OCI-LY7 (cell line): ENCODE measurements at regions of chr3 and their contacts with region 1.

Region 1: DNA sequence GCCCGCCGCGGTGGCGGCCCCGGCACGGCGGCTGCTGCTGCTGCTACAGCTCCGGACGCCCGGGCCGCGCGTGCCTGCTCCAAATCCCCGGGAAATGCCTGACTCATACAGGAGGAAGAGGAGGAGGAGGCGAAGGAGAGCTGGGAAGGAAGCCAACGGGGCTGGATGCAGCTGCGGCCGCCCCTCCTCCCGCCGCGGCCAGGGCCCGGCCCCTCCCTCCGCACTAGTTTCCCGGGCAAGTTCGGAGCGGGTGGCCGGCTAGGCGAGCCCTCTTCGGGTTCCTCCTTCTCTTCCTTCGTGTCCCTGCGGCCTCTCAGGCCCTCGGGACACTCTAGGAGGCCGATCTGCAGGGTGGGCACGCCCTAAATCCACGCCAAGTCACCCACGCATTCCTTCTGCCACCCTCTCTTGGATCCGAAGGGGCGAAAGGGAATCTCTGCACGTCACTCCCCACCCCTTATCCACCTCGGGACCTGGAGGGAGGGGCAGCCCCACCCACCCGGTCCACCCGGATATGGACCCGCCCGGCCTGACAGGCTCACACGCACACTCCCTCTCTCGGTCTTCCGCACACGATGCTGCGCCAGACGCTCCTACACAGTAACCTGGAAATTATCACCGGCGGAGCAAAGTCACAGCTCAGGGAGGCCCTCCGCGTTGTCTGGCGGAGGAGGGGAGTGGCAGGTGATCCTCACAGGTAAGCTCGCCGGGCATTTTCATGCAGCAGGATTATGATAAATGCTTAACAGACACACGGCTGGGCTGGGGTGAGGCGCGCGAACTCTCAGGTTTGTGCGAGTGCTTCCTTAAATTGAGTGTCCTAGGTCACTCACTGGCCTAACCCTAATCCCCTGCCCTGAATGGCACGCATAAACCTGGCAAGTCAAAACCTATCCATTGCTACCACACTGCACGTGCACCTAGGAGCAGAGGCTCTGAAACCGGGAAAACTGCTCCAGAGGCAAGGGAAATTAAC is at the starts of genes OSBPL10 and ZNF860:
- DNase-seq: peak; percentile 81
- H3K4me3 ChIP-seq: peak within 1 kb of the TSS; percentile 91
- H3K27ac ChIP-seq: peak within 1 kb of the TSS; percentile 88
- H3K4me1 ChIP-seq: peaks cover 72% of the 10 kb centered on the region
- CTCF ChIP-seq: peak; percentile 11; the same call in 1 of the 2 replicates
- total RNA-seq, gene OSBPL10: 58.4 and 65.7 TPM in 2 replicates
- total RNA-seq, gene ZNF860: 13.8 and 20.3 TPM in 2 replicates

Region 2: DNA sequence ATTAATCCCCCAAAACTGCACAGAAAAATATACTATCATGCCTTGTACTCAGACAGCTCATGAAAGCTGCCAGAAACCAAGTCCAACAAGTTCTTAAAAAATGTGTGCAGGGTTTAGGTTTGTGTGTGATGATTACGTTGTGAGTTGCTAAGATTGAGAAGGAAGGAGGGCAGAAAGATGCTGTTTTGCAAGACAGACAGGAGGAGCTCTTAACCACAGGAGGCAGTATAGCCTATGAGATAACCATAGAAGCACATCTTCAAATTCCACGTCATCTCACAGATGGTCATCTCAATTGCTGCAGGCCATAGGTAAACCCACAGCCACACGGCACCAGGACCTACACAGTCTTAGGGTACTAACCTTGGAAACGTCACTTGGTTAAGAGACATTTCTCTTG is 256.8 kb before region 1 on chr3:
- CTCF ChIA-PET with region 1: interaction called, 3 read pairs
- POLR2A ChIA-PET with region 1: no interaction called
- intact Hi-C with region 1: loop called (anchors 10 kb)
- DNase-seq: peak; percentile 65
- H3K4me3 ChIP-seq: no peak overlapping the region
- H3K27ac ChIP-seq: no peak overlapping the region
- H3K4me1 ChIP-seq: peaks cover 9% of the 10 kb centered on the region
- CTCF ChIP-seq: peak; percentile 81

Region 3: DNA sequence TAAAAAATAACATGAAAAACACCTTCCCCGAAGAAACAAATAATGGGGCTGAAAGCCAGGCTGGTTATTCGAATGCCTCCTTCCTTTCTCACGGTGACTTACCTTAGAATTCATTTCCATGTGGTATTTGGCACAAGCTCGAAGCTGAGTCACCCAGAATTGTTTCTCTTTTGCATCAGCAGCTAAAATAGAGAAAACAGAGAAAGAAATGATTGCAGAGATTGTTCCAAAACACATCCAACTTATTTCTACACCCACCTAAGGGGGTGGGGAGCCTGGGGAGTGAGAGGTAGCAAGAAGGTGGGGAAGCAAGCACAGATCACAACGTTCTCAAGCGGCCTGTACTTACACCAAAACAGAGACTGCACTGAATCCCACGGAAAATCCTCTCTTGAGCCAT is 105.2 kb before region 1 on chr3:
- CTCF ChIA-PET with region 1: interaction called, 4 read pairs
- POLR2A ChIA-PET with region 1: interaction called, 3 read pairs
- intact Hi-C with region 1: loop called (anchors 2 kb)
- DNase-seq: no peak
- H3K4me3 ChIP-seq: peak overlapping the region; percentile 68
- H3K27ac ChIP-seq: peak overlapping the region; percentile 90
- H3K4me1 ChIP-seq: peaks cover 83% of the 10 kb centered on the region
- CTCF ChIP-seq: no peak

Region 4: DNA sequence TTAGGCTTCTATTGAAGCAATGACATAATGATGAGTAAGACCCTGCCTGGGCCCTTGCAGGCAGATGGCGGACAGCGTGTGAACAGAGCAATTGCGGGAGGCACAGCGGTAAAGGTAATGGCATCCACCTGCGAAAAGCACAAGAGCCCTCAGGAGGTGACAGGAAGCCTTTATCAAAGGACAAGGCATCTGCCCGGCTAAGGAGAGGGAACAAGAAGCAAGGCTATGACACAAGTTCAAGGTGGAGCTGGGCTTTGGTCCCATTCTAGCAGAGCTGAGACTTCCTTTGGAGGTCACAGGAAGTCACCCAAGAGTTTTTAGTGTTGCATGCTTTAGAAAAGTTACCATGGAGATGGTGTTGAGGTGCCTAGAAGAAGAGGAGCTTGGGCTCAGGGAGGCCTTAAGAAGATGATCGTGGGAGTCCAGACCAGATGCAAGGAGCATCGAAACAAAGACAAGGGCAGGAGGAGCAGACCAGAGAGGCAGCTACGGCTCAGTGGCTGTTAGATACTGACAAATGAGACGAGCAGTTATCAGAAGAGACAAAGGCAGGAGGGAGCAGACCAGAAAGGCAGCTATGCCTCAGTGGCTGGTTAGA is 34.9 kb before region 1 on chr3:
- CTCF ChIA-PET with region 1: interaction called, 3 read pairs
- POLR2A ChIA-PET with region 1: interaction called, 13 read pairs
- intact Hi-C with region 1: loop called (anchors 1 kb)
- DNase-seq: peak; percentile 82
- H3K4me3 ChIP-seq: peak overlapping the region; percentile 57
- H3K27ac ChIP-seq: peak overlapping the region; percentile 100
- H3K4me1 ChIP-seq: peaks cover 99% of the 10 kb centered on the region
- CTCF ChIP-seq: no peak

Region 5: DNA sequence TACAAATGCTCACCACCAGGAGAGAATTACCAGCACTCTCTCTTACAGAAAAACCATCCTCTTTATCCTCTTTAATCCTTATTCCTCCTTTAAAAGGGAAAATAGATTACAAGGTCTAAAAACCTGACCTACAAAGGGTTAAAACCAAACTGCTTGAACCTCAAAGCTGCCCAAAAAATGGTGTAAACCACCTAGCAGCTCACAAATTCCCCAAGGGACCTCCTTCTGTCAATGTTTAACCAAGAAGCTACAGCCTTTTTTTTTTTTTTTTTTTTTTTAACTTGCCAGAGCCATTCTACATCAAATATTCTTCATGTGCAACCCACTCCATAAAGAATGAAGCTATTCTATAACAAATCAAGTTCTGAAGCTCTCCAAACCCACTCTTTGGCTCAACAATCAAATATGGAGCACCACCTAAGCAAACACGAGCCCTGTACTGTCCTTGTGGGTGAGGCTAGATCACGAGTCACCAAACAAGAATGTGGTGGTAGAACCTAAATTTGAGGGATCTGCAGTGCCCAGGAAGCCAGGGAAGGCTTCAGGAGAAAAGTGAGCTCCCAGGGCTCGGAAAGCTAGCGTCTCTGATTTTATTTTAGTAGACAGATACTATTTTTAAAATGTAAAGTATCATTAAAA is 20.6 kb before region 1 on chr3:
- CTCF ChIA-PET with region 1: interaction called, 3 read pairs
- POLR2A ChIA-PET with region 1: interaction called, 58 read pairs
- intact Hi-C with region 1: no loop called
- DNase-seq: peak; percentile 85
- H3K4me3 ChIP-seq: peak overlapping the region; percentile 65
- H3K27ac ChIP-seq: peak overlapping the region; percentile 91
- H3K4me1 ChIP-seq: peaks cover 82% of the 10 kb centered on the region
- CTCF ChIP-seq: no peak

Region 6: GRCh38 chr3:32026593-32026992 is 45.1 kb after region 1 on chr3:
- CTCF ChIA-PET with region 1: interaction called, 4 read pairs
- POLR2A ChIA-PET with region 1: interaction called, 4 read pairs
- intact Hi-C with region 1: loop called (anchors 2 kb)
- DNase-seq: peak; percentile 98
- H3K4me3 ChIP-seq: peak overlapping the region; percentile 42
- H3K27ac ChIP-seq: peak overlapping the region; percentile 100
- H3K4me1 ChIP-seq: peaks cover 61% of the 10 kb centered on the region
- CTCF ChIP-seq: no peak